ENCODE measurements at regions of chr19 and their contacts with region 1.

Region 1: GRCh38 chr19:55461259-55461973 is at the start of gene ISOC2:
- DNase-seq: peak; percentile 99 to 100 (median 99)
- H3K4me3 ChIP-seq: peak within 1 kb of the TSS; percentile 68 to 83 (median 72)
- H3K4me3 Mint-ChIP-seq: peak within 1 kb of the TSS; percentile 87 to 94
- H3K27ac ChIP-seq: peak within 1 kb of the TSS; percentile 76 to 92
- H3K27ac Mint-ChIP-seq: peak within 1 kb of the TSS; percentile 82 to 94 (median 90)
- H3K4me1 ChIP-seq: peaks cover 15 to 24% of the 10 kb centered on the region in 2 donors
- H3K4me1 Mint-ChIP-seq: peaks cover 18% of the 10 kb centered on the region
- H3K27me3 ChIP-seq: no peaks in the 10 kb centered on the region
- H3K27me3 Mint-ChIP-seq: peaks cover 2 to 4% (median 3%) of the 10 kb centered on the region in 3 donors
- CTCF ChIP-seq: no peak
- polyA plus RNA-seq, gene ISOC2: 14.8 to 20.2 (median 14.9) TPM

Region 2: GRCh38 chr19:55407800-55408532 is 53.5 kb before region 1 on chr19:
- intact Hi-C with region 1: loop called in 1 of 2 experiments (anchors 2 kb)
- DNase-seq: peak; percentile 99 to 100 (median 100)
- H3K4me3 ChIP-seq: peak overlapping the region; percentile 32 to 86 (median 37)
- H3K4me3 Mint-ChIP-seq: peak overlapping the region; percentile 84 to 91
- H3K27ac ChIP-seq: peak overlapping the region; percentile 95 to 96
- H3K27ac Mint-ChIP-seq: peak overlapping the region; percentile 96 to 98 (median 97)
- H3K4me1 ChIP-seq: peaks cover 22 to 31% of the 10 kb centered on the region in 2 donors
- H3K4me1 Mint-ChIP-seq: peaks cover 26% of the 10 kb centered on the region
- H3K27me3 ChIP-seq: no peaks in the 10 kb centered on the region
- H3K27me3 Mint-ChIP-seq: peaks cover 3 to 6% (median 4%) of the 10 kb centered on the region in 3 donors
- CTCF ChIP-seq: no peak

Region 3: GRCh38 chr19:55476100-55476775 is 14.8 kb after region 1 on chr19 and contains the start of gene ZNF628:
- intact Hi-C with region 1: loop called in 1 of 2 experiments (anchors 2 kb)
- DNase-seq: peak; percentile 93 to 98 (median 97)
- H3K4me3 ChIP-seq: peak within 1 kb of the TSS; percentile 59 to 95 (median 84)
- H3K4me3 Mint-ChIP-seq: peak within 1 kb of the TSS; percentile 85 to 95
- H3K27ac ChIP-seq: peak within 1 kb of the TSS; percentile 52 to 78
- H3K27ac Mint-ChIP-seq: peak within 1 kb of the TSS; percentile 87 to 95 (median 93)
- H3K4me1 ChIP-seq: peaks cover 16 to 21% of the 10 kb centered on the region in 2 donors
- H3K4me1 Mint-ChIP-seq: peaks cover 35% of the 10 kb centered on the region
- H3K27me3 ChIP-seq: no peaks in the 10 kb centered on the region
- H3K27me3 Mint-ChIP-seq: peaks cover 0 to 4% (median 0%) of the 10 kb centered on the region in 3 donors
- CTCF ChIP-seq: no peak
- polyA plus RNA-seq, gene ZNF628: 0.50 to 3.1 TPM in 2 of 3 donors, not detected in the other